Activated T-helper 1 cell treated with anti-CD3 and anti-CD28 coated beads, Interleukin-12 subunit alpha, Interleukin-12 subunit beta, Interleukin-2, Interleukin-4 antibody, amounts not matched to agents 30 ng/mL and 10 ng/mL and 1 ng/mL, durations not matched to agents 14 hours and 24 hours and 36 hours (primary cell): ENCODE measurements at regions of chr3 and their contacts with region 1.

Region 1: GRCh38 chr3:38453075-38453912 is at the start of gene ACVR2B:
- DNase-seq: peak; percentile 66
- H3K4me3 Mint-ChIP-seq: peak within 1 kb of the TSS; percentile 97
- H3K27ac Mint-ChIP-seq: peak within 1 kb of the TSS; percentile 80
- H3K4me1 Mint-ChIP-seq: peaks cover 10% of the 10 kb centered on the region
- H3K27me3 Mint-ChIP-seq: peaks cover 15% of the 10 kb centered on the region
- total RNA-seq, gene ACVR2B: 10.4 and 10.5 TPM in 2 replicates

Region 2: DNA sequence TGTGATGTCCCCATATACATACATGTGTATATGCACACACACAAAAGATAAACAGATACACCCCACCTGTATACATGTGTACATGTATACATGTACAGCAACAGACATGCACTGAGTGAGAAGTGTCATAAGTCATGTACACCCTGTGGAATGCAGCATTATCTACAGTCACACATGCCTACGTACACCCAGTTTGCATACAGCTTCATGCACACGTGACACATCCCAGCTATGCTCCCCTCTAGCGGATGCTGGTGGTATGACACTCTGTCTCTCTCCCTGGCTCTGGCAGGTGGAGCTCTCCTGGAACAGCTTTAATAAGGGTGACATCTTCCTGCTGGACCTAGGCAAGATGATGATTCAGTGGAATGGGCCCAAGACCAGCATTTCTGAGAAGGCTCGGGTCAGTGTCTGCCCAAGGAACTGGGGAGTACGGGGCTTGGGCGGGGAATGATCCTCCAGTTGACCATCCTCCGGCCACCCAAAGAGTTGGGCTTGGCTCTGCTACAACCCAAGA is 456.5 kb before region 1 on chr3:
- intact Hi-C with region 1: loop called (anchors 5 kb)
- DNase-seq: peak; percentile 80
- H3K4me3 Mint-ChIP-seq: peak overlapping the region; percentile 9
- H3K27ac Mint-ChIP-seq: peak overlapping the region; percentile 70
- H3K4me1 Mint-ChIP-seq: peaks cover 61% of the 10 kb centered on the region
- H3K27me3 Mint-ChIP-seq: no peaks in the 10 kb centered on the region

Region 3: DNA sequence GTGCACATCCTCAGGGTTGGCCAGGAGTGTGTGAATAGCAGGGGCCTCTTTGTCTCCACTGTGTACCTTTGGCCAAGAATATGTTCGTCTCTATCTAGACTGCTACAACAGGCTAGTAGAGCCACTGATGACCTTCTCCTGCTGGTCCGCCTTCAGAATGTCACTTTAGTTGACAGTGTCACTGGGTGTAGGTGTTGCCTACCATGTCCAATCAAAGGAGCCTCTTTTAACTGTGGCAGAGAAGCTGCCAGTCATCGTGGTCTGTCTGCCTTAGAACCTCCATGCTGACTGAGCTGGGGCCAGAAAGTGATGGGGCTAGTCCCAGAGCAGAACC is 247.9 kb before region 1 on chr3:
- intact Hi-C with region 1: loop called (anchors 5 kb)
- DNase-seq: peak; percentile 16
- H3K4me3 Mint-ChIP-seq: peak overlapping the region; percentile 38
- H3K27ac Mint-ChIP-seq: peak overlapping the region; percentile 80
- H3K4me1 Mint-ChIP-seq: peaks cover 73% of the 10 kb centered on the region
- H3K27me3 Mint-ChIP-seq: no peaks in the 10 kb centered on the region

Region 4: GRCh38 chr3:38327335-38328009 is 125.8 kb before region 1 on chr3:
- intact Hi-C with region 1: no loop called
- DNase-seq: no peak
- H3K4me3 Mint-ChIP-seq: no peak overlapping the region
- H3K27ac Mint-ChIP-seq: no peak overlapping the region
- H3K4me1 Mint-ChIP-seq: no peaks in the 10 kb centered on the region
- H3K27me3 Mint-ChIP-seq: peaks cover 14% of the 10 kb centered on the region

Region 5: GRCh38 chr3:39051647-39052561 is 598.6 kb after region 1 on chr3 and contains the starts of genes SCN11A and WDR48:
- intact Hi-C with region 1: loop called (anchors 2 kb)
- DNase-seq: peak; percentile 91
- H3K4me3 Mint-ChIP-seq: peak within 1 kb of the TSS; percentile 93
- H3K27ac Mint-ChIP-seq: peak within 1 kb of the TSS; percentile 95
- H3K4me1 Mint-ChIP-seq: peaks cover 30% of the 10 kb centered on the region
- H3K27me3 Mint-ChIP-seq: no peaks in the 10 kb centered on the region
- total RNA-seq, gene SCN11A: 0.05 TPM in 1 of 2 replicates, not detected in the other
- total RNA-seq, gene WDR48: 40.6 and 41.5 TPM in 2 replicates